Activated CD4-positive, alpha-beta T cell treated with anti-CD3 and anti-CD28 coated beads, Interleukin-2, amount 10 ng/mL, durations not matched to agents 24 days and 14 days (primary cell): ENCODE measurements at regions of chr12 and their contacts with region 1.

Region 1: GRCh38 chr12:48105862-48106680 is at the start of gene SENP1:
- DNase-seq: peak; percentile 97
- H3K4me3 Mint-ChIP-seq: peak within 1 kb of the TSS; percentile 97
- H3K27ac Mint-ChIP-seq: peak within 1 kb of the TSS; percentile 95
- H3K4me1 Mint-ChIP-seq: peaks cover 39% of the 10 kb centered on the region
- H3K27me3 Mint-ChIP-seq: peaks cover 6% of the 10 kb centered on the region
- total RNA-seq, gene SENP1: 55.4 and 58.6 TPM in 2 replicates

Region 2: GRCh38 chr12:47672068-47672467 is 434.0 kb before region 1 on chr12:
- intact Hi-C with region 1: no loop called
- DNase-seq: no peak
- H3K4me3 Mint-ChIP-seq: no peak overlapping the region
- H3K27ac Mint-ChIP-seq: no peak overlapping the region
- H3K4me1 Mint-ChIP-seq: peaks cover 20% of the 10 kb centered on the region
- H3K27me3 Mint-ChIP-seq: no peaks in the 10 kb centered on the region

Region 3: GRCh38 chr12:48119078-48119833 is 13.2 kb after region 1 on chr12 and contains the start of gene PFKM:
- intact Hi-C with region 1: loop called (anchors 1 kb)
- DNase-seq: peak; percentile 92
- H3K4me3 Mint-ChIP-seq: peak within 1 kb of the TSS; percentile 98
- H3K27ac Mint-ChIP-seq: peak within 1 kb of the TSS; percentile 91
- H3K4me1 Mint-ChIP-seq: peaks cover 18% of the 10 kb centered on the region
- H3K27me3 Mint-ChIP-seq: peaks cover 25% of the 10 kb centered on the region
- total RNA-seq, gene PFKM: 87.3 and 93.2 TPM in 2 replicates

Region 4: DNA sequence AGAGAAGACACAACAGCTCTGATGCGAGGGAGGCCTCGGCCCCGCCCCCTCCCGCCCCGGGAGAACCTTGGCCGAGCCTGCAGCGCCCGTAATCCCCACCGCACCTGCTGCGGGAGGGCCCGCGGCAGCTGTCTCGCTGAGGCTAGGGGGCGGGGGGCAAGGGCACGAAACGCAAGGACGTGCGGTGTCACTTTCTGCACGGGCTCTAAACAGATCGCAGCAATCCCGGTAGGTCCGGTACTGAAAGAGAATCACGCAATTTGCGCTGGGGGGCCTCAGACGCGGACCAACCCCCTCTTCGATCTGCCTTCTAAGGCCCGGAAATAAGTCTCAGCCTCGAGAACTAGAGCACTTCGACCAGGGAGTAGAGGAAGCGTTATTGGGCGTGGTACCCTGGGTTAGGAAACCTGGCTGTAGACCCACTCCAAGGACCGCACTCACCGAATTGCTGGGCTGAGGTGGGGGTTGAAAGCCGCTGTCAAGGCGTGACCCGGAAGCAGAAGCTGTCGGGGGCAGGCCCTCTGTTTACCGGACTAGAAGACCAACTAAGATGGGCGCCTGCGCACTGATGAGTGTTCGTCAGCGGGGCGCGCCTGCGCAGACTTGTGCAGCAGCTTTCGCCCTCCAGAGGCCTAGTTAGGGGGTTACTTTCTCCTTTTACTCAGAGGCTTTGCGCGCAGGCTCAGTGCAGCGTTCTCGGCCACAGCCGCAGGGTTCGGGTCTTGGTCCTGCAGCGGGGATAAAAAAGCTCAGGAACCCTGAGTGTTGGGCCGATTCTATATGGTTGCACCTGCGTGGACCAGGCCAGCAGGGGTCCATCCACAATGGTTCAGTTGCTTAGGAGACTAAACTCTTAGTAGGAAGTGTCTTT is 51.2 kb after region 1 on chr12 and contains the start of gene ASB8:
- intact Hi-C with region 1: loop called (anchors 1 kb)
- DNase-seq: peak; percentile 100
- H3K4me3 Mint-ChIP-seq: peak within 1 kb of the TSS; percentile 98
- H3K27ac Mint-ChIP-seq: peak within 1 kb of the TSS; percentile 96
- H3K4me1 Mint-ChIP-seq: peaks cover 24% of the 10 kb centered on the region
- H3K27me3 Mint-ChIP-seq: peaks cover 6% of the 10 kb centered on the region
- total RNA-seq, gene ASB8: 30.0 and 35.8 TPM in 2 replicates

Region 5: DNA sequence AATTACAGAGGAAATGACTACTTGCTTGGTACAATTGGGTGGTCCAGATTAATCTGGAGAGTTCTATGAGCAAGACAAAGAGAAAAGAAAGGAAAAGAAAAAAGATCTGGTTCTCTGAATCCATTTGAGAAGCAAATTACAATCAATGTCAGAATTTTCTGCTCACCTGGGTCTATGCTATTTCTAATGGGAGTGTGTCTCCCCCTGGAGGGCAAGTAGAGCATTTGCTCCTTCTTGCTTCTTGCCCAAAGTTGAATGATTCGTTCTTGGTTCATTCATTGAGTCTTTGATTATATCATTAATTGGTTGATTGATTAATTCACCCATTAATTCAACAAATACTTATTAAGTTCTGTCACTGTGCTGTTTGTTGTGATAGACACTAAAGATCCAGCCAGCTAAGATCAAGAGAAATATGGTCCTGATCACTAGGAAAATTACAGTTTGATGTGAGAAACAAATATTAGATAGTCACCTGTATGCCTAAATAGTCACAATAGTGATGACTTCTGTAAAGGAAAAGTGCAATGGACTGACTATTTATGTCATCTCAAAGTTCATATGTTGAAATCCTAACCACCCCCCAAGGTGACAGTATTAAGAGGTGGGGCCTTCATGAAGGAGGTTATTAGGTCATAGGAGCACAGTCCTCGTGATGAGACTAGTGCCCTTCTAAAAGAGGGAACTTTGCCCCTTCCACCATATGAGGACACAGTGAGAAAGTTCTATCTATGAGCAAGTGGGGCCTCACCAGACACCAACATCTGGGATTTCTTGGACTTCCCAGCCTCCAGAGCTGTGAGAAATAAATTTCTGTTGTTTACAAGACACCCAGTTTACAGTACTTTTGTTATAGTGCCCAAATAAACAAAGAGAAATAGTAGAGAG is 59.3 kb after region 1 on chr12:
- intact Hi-C with region 1: loop called (anchors 2 kb)
- DNase-seq: peak; percentile 88
- H3K4me3 Mint-ChIP-seq: no peak overlapping the region
- H3K27ac Mint-ChIP-seq: no peak overlapping the region
- H3K4me1 Mint-ChIP-seq: no peaks in the 10 kb centered on the region
- H3K27me3 Mint-ChIP-seq: peaks cover 30% of the 10 kb centered on the region

Region 6: DNA sequence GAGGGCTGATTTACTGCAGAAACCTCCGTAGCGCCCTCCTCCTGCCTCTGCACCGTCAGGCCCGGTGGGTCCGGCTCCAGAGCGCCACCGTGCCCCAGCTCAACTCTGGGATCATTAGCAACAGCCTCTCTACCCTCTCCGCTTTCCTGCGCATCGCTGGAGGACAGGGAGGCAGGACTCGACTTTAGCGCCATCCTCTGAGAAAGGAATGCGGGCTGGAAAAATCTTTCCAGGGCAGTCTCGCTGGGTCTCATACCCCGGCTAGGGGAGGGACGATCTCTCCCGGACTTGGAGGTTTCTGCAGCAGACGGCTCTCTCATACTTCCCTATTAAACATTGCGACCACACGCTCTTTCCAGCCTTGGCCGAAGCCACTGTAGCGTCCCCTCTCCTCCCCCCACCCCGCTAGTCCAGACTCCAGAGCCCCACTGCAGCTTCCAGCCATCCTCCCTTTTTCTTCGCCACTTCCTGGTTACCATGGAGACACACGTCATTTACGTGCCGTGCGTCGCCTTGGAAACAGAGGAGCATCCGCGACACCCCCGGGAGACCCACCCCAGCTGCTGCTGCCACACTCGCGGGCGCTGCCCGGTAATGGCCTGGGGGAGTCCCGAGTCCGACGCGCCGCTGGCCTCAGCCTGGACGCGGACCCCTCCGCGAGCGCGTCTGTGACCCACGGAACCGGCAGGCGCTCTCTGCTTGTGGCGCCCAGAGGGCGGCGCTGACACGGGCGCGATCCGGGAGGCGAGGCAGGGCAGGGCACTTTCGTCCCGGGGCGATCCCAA is 77.2 kb after region 1 on chr12 and contains the start of gene CCDC184:
- intact Hi-C with region 1: loop called (anchors 1 kb)
- DNase-seq: peak; percentile 95
- H3K4me3 Mint-ChIP-seq: peak within 1 kb of the TSS; percentile 95
- H3K27ac Mint-ChIP-seq: peak within 1 kb of the TSS; percentile 85
- H3K4me1 Mint-ChIP-seq: peaks cover 29% of the 10 kb centered on the region
- H3K27me3 Mint-ChIP-seq: peaks cover 68% of the 10 kb centered on the region
- total RNA-seq, gene CCDC184: 0.38 and 0.44 TPM in 2 replicates

Region 7: DNA sequence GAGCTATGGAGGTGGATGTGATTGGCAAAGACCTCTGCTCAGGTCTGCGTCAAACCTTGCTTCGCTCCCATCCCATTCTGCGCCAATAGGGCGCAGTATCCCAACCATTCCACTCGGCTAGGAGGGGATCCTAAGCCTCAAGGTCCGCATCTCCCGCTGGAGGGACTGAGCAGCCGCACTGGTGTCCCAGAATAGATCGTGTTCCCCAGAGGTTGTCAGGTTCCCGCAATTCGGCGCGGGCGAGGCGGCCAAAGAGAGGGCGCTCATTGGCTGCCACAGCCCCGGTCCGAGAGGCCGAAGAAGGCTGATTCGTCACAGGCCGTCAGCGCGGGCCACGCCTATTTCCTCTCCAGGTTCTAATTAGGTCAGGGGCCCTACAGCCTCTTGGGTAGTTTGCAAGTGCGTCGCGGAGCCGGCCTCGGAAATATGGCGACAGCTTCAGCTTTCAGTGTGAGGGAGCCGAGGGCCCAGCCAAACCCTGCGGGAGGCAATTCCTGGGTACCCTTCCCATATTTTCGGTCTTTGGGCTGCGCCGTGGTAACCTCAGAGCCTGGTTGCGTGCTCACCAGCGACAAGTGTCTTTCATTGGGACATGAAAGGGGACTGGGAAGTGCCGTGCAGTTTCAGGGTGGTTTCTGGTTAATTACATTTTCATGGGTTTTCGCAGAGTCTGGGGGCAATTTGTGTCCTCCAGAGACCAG is 92.0 kb after region 1 on chr12:
- intact Hi-C with region 1: loop called (anchors 1 kb)
- DNase-seq: peak; percentile 97
- H3K4me3 Mint-ChIP-seq: peak overlapping the region; percentile 88
- H3K27ac Mint-ChIP-seq: peak overlapping the region; percentile 97
- H3K4me1 Mint-ChIP-seq: peaks cover 29% of the 10 kb centered on the region
- H3K27me3 Mint-ChIP-seq: peaks cover 19% of the 10 kb centered on the region